ENCODE measurements at regions of chr11 and their contacts with region 1.

Region 1: DNA sequence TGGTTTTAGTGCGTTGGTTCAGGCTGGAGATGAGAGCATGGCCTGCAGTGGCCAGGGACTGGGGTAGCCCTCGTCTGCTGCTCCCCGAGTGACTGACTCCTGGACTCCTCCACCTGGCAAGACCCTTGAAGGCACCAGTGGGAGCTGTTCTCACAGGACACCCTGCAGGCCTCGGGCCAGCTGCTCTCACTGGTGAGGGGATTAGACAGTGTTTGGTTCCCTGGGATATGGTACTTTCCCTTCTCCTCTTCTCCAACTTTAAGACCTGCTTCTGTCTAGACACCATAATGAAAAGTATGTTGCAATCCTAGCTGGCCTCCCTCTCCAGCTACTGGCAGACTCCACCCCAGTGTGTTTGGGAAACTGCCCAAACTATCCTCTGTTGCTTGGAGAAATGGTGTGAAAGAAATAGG is 168.8 kb upstream of the CADM1 start:
- DNase-seq: peak in 1 of 5 donors; percentile 25
- H3K4me3 ChIP-seq: no peak overlapping the region
- H3K27ac ChIP-seq: no peak overlapping the region
- H3K4me1 ChIP-seq: no peaks in the 10 kb centered on the region
- H3K27me3 ChIP-seq: no peaks in the 10 kb centered on the region
- CTCF ChIP-seq: no peak
- EP300 ChIP-seq: no peak
- POLR2A ChIP-seq: no peak

Region 2: DNA sequence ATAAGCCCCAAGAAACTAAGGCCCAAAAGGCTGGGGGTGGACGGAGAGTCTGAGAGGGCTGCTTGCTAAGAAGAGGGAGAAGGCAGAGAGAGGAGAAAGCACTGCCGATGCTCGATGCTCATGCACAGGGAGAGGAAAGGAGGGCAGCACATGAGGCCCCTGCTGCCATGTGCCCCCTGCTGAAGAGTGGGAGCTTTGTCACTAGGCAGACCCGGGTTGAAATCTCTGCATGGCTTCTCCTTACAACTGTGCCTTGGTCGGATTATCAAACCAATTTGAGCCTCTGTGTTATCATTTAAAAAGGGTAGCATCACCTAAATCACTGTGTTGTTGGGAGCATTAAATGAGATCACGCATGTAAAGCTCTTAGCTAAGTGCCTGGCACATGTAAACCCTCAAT is 664.2 kb before region 1 on chr11:
- intact Hi-C with region 1: no loop called
- DNase-seq: no peak
- H3K4me3 ChIP-seq: no peak overlapping the region
- H3K27ac ChIP-seq: no peak overlapping the region
- H3K4me1 ChIP-seq: no peaks in the 10 kb centered on the region
- H3K27me3 ChIP-seq: no peaks in the 10 kb centered on the region
- CTCF ChIP-seq: no peak
- EP300 ChIP-seq: no peak
- POLR2A ChIP-seq: no peak

Region 3: GRCh38 chr11:115496917-115497702 is 175.9 kb before region 1 on chr11:
- intact Hi-C with region 1: no loop called
- DNase-seq: no peak
- H3K4me3 ChIP-seq: no peak overlapping the region
- H3K27ac ChIP-seq: no peak overlapping the region
- H3K4me1 ChIP-seq: peaks cover 3% of the 10 kb centered on the region
- H3K27me3 ChIP-seq: no peaks in the 10 kb centered on the region
- CTCF ChIP-seq: no peak
- EP300 ChIP-seq: no peak
- POLR2A ChIP-seq: no peak

Region 4: GRCh38 chr11:115637599-115638241 is 35.3 kb before region 1 on chr11:
- intact Hi-C with region 1: no loop called
- DNase-seq: no peak
- H3K4me3 ChIP-seq: no peak overlapping the region
- H3K27ac ChIP-seq: no peak overlapping the region
- H3K4me1 ChIP-seq: no peaks in the 10 kb centered on the region
- H3K27me3 ChIP-seq: no peaks in the 10 kb centered on the region
- CTCF ChIP-seq: no peak
- EP300 ChIP-seq: no peak
- POLR2A ChIP-seq: no peak

Region 5: DNA sequence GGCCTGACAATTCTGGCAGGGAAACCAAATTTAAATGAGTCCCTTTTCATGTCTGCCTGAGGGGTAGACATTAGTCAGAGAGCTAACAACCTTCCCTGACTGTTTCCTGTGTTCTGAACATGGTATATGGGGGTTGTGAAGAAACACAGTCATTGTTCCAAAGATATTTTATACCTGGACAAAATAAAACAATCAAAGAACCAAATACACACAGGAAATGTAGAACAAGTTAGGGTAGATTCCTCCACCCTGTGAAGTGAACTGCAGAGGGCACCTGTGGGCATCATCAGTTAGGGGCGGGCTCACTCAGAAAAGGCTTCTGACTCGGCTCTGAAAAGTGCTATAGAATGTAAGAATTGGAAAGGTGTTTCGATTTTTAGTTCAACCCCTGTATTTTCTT is 63.1 kb after region 1 on chr11:
- intact Hi-C with region 1: loop called in 1 of 4 experiments (anchors 10 kb)
- DNase-seq: no peak
- H3K4me3 ChIP-seq: no peak overlapping the region
- H3K27ac ChIP-seq: no peak overlapping the region
- H3K4me1 ChIP-seq: no peaks in the 10 kb centered on the region
- H3K27me3 ChIP-seq: no peaks in the 10 kb centered on the region
- CTCF ChIP-seq: no peak
- EP300 ChIP-seq: no peak
- POLR2A ChIP-seq: no peak

Region 6: GRCh38 chr11:115974703-115975102 is 301.7 kb after region 1 on chr11:
- intact Hi-C with region 1: no loop called
- DNase-seq: no peak
- H3K4me3 ChIP-seq: no peak overlapping the region
- H3K27ac ChIP-seq: no peak overlapping the region
- H3K4me1 ChIP-seq: no peaks in the 10 kb centered on the region
- H3K27me3 ChIP-seq: no peaks in the 10 kb centered on the region
- CTCF ChIP-seq: no peak
- EP300 ChIP-seq: no peak
- POLR2A ChIP-seq: no peak

Measured in ovary (tissue), 10 donors.